WTC11 (cell line): ENCODE measurements at regions of chr11 and their contacts with region 1.

Region 1: DNA sequence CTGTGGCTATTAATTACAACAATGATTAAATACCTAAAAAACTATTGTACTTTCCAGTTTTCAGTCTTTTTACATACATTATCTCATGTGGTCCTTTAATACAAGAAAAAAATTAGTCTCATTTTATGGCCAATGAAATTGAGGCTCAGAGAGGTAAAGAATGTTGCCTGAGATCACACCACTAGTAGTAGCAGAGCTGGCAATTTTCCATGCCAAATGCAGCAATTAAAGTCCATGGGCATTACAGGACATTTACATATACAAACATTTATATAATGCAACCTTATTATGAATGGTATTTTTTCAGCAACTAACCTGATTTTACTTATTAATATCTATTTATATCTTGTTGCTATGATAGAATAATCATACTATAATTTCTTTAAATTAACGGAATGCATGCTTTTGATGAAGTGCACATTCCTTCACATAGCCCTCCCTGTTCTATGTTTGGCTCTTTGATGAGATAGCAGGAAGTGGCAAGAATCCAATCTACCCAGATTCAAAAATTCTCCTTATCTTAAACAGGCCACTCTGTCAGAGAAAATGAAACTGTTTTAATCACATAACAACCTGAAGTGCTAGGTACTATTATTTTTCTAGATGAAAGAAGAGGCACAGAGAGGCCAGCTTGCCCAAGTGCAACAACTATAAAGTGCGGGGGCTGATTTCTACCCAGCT is 120.9 kb upstream of the LDLRAD3 start:
- DNase-seq: no peak
- ATAC-seq: no peak
- H3K4me3 Mint-ChIP-seq: no peak overlapping the region
- H3K27ac Mint-ChIP-seq: no peak overlapping the region
- H3K4me1 Mint-ChIP-seq: peaks cover 15% of the 10 kb centered on the region
- H3K27me3 Mint-ChIP-seq: peaks cover 8% of the 10 kb centered on the region; the same call in 1 of the 2 replicates
- CTCF ChIP-seq: no peak

Region 2: DNA sequence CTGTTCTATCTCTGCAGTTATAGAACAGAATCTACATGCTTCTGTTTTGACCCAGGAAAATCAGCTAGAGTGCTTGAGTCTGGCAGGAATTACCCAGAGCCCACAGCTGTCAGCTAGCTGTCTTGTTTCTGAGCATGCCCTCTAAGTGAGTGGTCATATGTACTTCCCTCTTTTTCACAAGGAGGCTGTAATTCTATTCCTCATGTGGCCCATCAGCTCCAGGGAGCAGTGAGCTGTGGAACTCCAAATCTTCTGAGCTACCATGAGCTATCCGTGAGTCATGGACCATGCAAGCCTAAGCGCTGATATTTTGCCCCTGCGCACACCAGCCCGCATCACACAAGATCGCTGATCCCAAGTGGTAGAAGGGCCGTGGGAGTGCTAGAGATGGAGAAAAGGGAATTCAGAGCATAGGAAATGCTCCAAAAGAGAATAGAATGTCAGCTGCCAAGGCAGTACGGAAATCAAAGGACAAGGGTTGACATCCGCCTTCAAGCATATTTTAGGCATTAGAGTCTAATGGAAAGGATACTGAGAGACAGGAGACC is 199.3 kb before region 1 on chr11:
- CTCF ChIA-PET with region 1: interaction called, 55 read pairs
- POLR2A ChIA-PET with region 1: no interaction called
- DNase-seq: no peak
- ATAC-seq: no peak
- H3K4me3 Mint-ChIP-seq: no peak overlapping the region
- H3K27ac Mint-ChIP-seq: no peak overlapping the region
- H3K4me1 Mint-ChIP-seq: peaks cover 26% of the 10 kb centered on the region
- H3K27me3 Mint-ChIP-seq: peaks cover 42% of the 10 kb centered on the region
- CTCF ChIP-seq: no peak

Region 3: GRCh38 chr11:35800970-35801953 is 21.7 kb before region 1 on chr11:
- CTCF ChIA-PET with region 1: interaction called, 59 read pairs
- POLR2A ChIA-PET with region 1: no interaction called
- DNase-seq: no peak
- ATAC-seq: no peak
- H3K4me3 Mint-ChIP-seq: no peak overlapping the region
- H3K27ac Mint-ChIP-seq: no peak overlapping the region
- H3K4me1 Mint-ChIP-seq: no peaks in the 10 kb centered on the region; the same call in none of the 2 replicates
- H3K27me3 Mint-ChIP-seq: no peaks in the 10 kb centered on the region
- CTCF ChIP-seq: no peak

Region 4: DNA sequence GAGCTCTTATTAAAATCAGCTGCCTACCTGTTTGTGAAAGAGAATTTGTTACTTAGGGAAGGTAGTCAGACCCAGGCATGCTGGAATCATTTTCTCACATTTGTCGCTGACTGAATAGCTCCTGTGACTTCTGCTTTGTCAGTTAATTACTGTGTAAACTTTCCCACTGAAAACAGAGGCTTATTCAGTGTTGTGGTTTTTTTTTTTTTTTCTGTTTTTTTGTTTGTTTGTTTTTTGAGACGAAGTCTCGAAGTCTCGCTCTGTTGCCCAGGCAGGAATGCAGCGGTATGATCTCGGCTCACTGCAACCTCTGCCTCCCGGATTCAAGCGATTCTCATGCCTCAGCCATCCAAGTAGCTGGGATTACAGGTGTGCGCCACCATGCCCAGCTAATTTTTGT is 115.3 kb after region 1 on chr11:
- CTCF ChIA-PET with region 1: interaction called, 30 read pairs
- POLR2A ChIA-PET with region 1: interaction called, 3 read pairs
- DNase-seq: no peak
- ATAC-seq: no peak
- H3K4me3 Mint-ChIP-seq: no peak overlapping the region
- H3K27ac Mint-ChIP-seq: no peak overlapping the region
- H3K4me1 Mint-ChIP-seq: peaks cover 10% of the 10 kb centered on the region
- H3K27me3 Mint-ChIP-seq: peaks cover 7% of the 10 kb centered on the region
- CTCF ChIP-seq: no peak

Region 5: GRCh38 chr11:36041988-36042611 is 219.1 kb after region 1 on chr11:
- CTCF ChIA-PET with region 1: interaction called, 36 read pairs
- POLR2A ChIA-PET with region 1: no interaction called
- DNase-seq: no peak
- ATAC-seq: peak; percentile 70; the same call in 1 of the 2 replicates
- H3K4me3 Mint-ChIP-seq: no peak overlapping the region
- H3K27ac Mint-ChIP-seq: peak overlapping the region; percentile 91
- H3K4me1 Mint-ChIP-seq: peaks cover 14% of the 10 kb centered on the region
- H3K27me3 Mint-ChIP-seq: no peaks in the 10 kb centered on the region
- CTCF ChIP-seq: no peak

Region 6: DNA sequence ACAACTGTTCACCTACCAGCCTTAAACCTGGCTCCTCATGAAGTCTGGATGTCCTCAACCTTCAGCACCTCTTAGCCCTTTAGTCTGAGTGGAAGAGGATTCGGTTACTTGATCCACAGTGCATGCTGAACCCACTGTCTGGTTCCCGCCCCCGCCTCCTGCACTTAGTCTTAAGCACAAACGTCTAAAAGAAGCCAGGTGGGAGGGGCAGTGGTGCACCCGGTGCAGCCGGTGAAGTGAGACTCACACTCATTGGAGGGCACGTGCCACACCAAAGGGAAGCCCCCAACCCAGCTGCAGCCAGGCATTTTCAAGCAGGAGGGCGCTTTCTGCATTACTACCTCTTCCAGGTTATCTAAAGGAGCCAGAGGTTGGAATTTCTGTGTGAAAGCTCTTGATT is 319.5 kb after region 1 on chr11:
- CTCF ChIA-PET with region 1: interaction called, 20 read pairs
- POLR2A ChIA-PET with region 1: no interaction called
- DNase-seq: no peak
- ATAC-seq: peak; percentile 29
- H3K4me3 Mint-ChIP-seq: no peak overlapping the region
- H3K27ac Mint-ChIP-seq: no peak overlapping the region
- H3K4me1 Mint-ChIP-seq: peaks cover 35% of the 10 kb centered on the region
- H3K27me3 Mint-ChIP-seq: no peaks in the 10 kb centered on the region
- CTCF ChIP-seq: no peak

Region 7: DNA sequence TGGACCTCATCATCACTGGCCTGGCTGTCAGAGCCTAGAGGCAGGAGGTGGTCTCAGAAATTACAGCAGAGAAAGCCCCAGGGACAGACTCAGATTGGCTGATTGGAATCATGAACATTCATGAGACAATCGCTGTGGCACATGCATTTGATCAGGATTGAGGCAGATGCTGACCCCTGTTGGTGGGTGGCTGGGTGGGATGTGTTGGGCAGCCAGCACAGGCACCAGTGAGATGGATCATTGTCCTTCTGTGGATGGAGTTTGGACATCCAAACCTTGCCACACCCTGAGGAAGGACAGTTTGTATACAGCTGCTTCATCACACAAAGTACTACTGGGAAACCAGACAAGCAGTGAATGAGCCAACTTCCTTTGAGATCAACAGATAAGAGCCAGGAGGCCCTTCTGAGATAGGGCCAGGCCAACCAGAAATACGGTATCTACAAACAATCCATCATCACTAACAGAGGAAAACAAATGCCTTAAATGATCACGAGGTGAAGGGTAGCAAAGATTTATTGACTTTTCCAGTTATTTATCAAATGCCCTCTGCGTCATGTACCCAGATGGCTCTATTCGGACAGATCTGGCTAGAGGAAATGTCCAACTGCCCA is 448.9 kb after region 1 on chr11:
- CTCF ChIA-PET with region 1: interaction called, 109 read pairs
- POLR2A ChIA-PET with region 1: no interaction called
- DNase-seq: no peak
- ATAC-seq: peak; percentile 46; the same call in 1 of the 2 replicates
- H3K4me3 Mint-ChIP-seq: no peak overlapping the region
- H3K27ac Mint-ChIP-seq: no peak overlapping the region
- H3K4me1 Mint-ChIP-seq: no peaks in the 10 kb centered on the region
- H3K27me3 Mint-ChIP-seq: no peaks in the 10 kb centered on the region; the same call in 1 of the 2 replicates
- CTCF ChIP-seq: no peak

Region 8: DNA sequence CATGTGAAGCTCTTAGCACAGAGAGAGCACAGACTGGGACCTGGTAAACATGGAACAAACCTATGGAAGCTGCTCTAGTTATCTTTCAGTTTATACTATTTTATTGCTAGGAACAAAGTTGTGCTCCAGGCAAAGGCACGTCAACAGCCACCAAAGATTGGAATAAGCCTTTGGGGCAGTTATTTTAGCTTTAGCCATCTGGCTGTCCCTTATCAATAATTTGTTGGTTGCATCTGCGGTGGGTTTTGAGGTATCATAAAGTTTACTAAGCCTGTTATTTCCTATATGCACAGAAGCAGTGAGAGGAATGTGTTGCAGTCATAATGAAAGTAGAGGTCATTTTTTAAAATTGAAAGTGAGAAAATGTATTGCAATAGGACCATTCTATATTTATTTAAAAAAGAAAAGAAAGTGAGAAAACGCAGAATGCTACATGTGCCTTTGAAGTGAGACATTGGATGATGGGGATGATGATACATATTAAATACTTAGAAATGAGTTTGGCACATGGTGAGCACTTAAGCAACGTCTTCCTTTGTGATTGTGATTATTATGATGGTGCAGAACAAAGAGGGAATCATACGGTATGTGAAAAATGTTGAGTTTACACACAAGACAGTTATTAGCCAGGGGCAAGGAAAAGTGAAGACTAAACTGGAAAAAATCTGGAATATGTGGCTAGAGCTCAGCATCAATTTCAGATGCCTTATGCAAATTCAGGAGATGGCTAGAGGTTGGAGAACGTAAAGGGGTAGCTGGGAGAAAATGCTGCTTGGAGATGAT is 531.5 kb after region 1 on chr11:
- CTCF ChIA-PET with region 1: no interaction called
- POLR2A ChIA-PET with region 1: no interaction called
- DNase-seq: no peak
- ATAC-seq: no peak
- H3K4me3 Mint-ChIP-seq: no peak overlapping the region
- H3K27ac Mint-ChIP-seq: no peak overlapping the region
- H3K4me1 Mint-ChIP-seq: peaks cover 7% of the 10 kb centered on the region
- H3K27me3 Mint-ChIP-seq: peaks cover 35% of the 10 kb centered on the region
- CTCF ChIP-seq: no peak

Region 9: GRCh38 chr11:36672813-36673450 is 850.0 kb after region 1 on chr11:
- CTCF ChIA-PET with region 1: no interaction called
- POLR2A ChIA-PET with region 1: no interaction called
- DNase-seq: no peak
- ATAC-seq: no peak
- H3K4me3 Mint-ChIP-seq: no peak overlapping the region
- H3K27ac Mint-ChIP-seq: no peak overlapping the region
- H3K4me1 Mint-ChIP-seq: no peaks in the 10 kb centered on the region
- H3K27me3 Mint-ChIP-seq: peaks cover 13% of the 10 kb centered on the region; the same call in 1 of the 2 replicates
- CTCF ChIP-seq: peak; percentile 74